ENCODE measurements at regions of chr3 and their contacts with region 1.

Region 1: GRCh38 chr3:167734498-167735232 is at the start of gene PDCD10:
- DNase-seq: peak; percentile 99
- ATAC-seq: peak; percentile 95 to 97 (median 96)
- H3K4me3 ChIP-seq: peak within 1 kb of the TSS; percentile 81
- H3K27ac ChIP-seq: peak within 1 kb of the TSS; percentile 90
- H3K4me1 ChIP-seq: peaks cover 20% of the 10 kb centered on the region
- H3K27me3 ChIP-seq: no peaks in the 10 kb centered on the region
- CTCF ChIP-seq: no peak
- total RNA-seq, gene PDCD10: 16.4 to 24.5 (median 21.3) TPM

Region 2: DNA sequence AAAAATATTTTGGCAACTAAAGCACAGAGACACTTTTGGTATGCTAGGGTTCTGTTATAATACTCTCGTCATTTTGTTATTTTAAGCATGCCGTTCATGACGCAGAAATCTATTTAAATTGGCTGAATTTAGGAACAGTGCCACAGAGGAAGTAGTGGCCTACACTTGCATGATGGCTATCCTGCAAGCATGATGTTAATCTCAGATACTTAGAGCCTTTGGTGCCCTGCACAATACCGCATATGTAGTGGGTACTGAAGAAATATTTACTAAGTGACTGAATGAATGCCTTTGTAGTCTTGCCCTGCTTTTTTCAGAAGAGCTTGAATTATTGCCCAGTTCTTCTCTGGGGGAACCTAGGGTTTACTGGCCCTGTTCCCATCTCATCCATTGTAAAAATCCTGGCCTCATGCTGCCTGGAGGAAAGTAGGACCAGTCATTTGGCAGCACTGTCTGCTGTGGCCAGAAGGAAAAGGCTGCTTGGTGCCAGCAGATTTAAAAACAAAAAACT is 79.8 kb after region 1 on chr3:
- intact Hi-C with region 1: loop called in 1 of 2 experiments (anchors 5 kb)
- DNase-seq: no peak
- ATAC-seq: peak; percentile 65 to 93 (median 80)
- H3K4me3 ChIP-seq: no peak overlapping the region
- H3K27ac ChIP-seq: peak overlapping the region; percentile 3
- H3K4me1 ChIP-seq: peaks cover 28% of the 10 kb centered on the region
- H3K27me3 ChIP-seq: no peaks in the 10 kb centered on the region
- CTCF ChIP-seq: peak; percentile 6

Region 3: GRCh38 chr3:168034152-168034928 is 299.7 kb after region 1 on chr3:
- intact Hi-C with region 1: loop called in 1 of 2 experiments (anchors 10 kb)
- DNase-seq: no peak
- ATAC-seq: peak; percentile 84 to 97 (median 91)
- H3K4me3 ChIP-seq: no peak overlapping the region
- H3K27ac ChIP-seq: peak overlapping the region; percentile 76
- H3K4me1 ChIP-seq: peaks cover 12% of the 10 kb centered on the region
- H3K27me3 ChIP-seq: no peaks in the 10 kb centered on the region
- CTCF ChIP-seq: no peak